ENCODE measurements at regions of chr15 and their contacts with region 1.

Region 1: GRCh38 chr15:29656636-29657475 is 165.4 kb downstream of the TJP1 start:
- DNase-seq: no peak
- ATAC-seq: no peak
- H3K4me3 ChIP-seq: no peak overlapping the region
- H3K4me3 Mint-ChIP-seq: no peak overlapping the region
- H3K27ac ChIP-seq: no peak overlapping the region
- H3K27ac Mint-ChIP-seq: no peak overlapping the region
- H3K4me1 ChIP-seq: no peaks in the 10 kb centered on the region
- H3K4me1 Mint-ChIP-seq: no peaks in the 10 kb centered on the region
- H3K27me3 ChIP-seq: no peaks in the 10 kb centered on the region
- H3K27me3 Mint-ChIP-seq: peaks cover 0 to 7% of the 10 kb centered on the region in 2 donors
- CTCF ChIP-seq: no peak

Region 2: DNA sequence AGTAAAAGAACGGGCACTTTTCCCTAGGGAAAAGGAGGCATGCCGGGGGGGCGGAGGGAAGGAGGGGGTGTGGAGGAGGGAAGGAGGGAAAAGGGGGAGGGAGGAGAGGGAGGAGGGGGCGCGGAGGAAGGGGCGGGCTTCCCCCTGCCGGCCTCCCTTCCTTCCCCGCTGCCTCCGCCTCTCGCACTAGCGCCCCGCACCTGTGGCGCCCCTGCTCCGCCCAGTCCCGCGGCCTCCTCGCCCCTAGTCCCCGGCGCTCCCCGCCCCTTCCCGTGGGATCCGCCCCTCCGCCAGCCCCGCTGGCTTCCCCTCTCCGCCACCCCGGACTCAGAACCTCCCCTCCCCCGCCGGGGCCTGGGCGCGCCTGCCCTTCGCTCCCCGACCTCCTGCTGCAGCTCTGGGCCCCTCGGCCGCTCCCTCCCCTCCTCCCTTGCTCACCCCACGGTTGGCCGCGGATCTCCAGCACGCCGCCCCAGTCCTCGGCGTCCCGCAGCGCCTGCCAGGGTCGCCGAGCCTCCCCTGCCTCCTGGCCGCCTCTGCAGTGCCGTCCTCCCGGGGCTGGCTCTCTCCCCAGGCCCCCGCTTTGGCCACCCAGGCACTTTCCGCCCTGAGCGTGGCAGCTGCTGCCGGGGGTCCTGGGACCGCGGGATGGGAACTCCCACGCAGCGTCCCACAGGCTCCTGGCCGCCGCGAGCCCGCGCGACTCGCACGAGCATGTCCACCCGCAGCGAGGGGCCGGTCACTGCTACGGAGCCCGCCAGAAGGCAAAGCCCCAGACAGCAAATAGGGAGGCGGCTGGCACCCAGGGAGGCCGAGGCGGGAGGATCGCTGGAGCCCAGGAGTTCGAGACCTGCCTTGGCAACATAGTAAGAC is 18.0 kb after region 1 on chr15:
- intact Hi-C with region 1: loop called (anchors 2 kb)
- DNase-seq: no peak
- ATAC-seq: peak in 1 of 3 donors; percentile 45
- H3K4me3 ChIP-seq: no peak overlapping the region
- H3K4me3 Mint-ChIP-seq: peak overlapping the region; percentile 35
- H3K27ac ChIP-seq: no peak overlapping the region
- H3K27ac Mint-ChIP-seq: no peak overlapping the region
- H3K4me1 ChIP-seq: peaks cover 14% of the 10 kb centered on the region
- H3K4me1 Mint-ChIP-seq: peaks cover 7 to 13% of the 10 kb centered on the region in 2 donors
- H3K27me3 ChIP-seq: peaks cover 3% of the 10 kb centered on the region
- H3K27me3 Mint-ChIP-seq: peaks cover 20% of the 10 kb centered on the region in 2 donors
- CTCF ChIP-seq: no peak